Posterior vena cava (tissue), 2 donors: ENCODE measurements at regions of chr5 and their contacts with region 1.

Region 1: GRCh38 chr5:77623203-77623740 is 15.2 kb downstream of the OTP start:
- DNase-seq: no peak

Region 2: GRCh38 chr5:77590347-77590746 is 32.9 kb before region 1 on chr5:
- intact Hi-C with region 1: no loop called
- DNase-seq: no peak

Region 3: GRCh38 chr5:77663090-77663863 is 40.0 kb after region 1 on chr5:
- intact Hi-C with region 1: loop called in 1 of 2 experiments (anchors 1 kb)
- DNase-seq: no peak